Motor neuron (in vitro differentiated cells): ENCODE measurements at regions of chr10 and their contacts with region 1.

Region 1: DNA sequence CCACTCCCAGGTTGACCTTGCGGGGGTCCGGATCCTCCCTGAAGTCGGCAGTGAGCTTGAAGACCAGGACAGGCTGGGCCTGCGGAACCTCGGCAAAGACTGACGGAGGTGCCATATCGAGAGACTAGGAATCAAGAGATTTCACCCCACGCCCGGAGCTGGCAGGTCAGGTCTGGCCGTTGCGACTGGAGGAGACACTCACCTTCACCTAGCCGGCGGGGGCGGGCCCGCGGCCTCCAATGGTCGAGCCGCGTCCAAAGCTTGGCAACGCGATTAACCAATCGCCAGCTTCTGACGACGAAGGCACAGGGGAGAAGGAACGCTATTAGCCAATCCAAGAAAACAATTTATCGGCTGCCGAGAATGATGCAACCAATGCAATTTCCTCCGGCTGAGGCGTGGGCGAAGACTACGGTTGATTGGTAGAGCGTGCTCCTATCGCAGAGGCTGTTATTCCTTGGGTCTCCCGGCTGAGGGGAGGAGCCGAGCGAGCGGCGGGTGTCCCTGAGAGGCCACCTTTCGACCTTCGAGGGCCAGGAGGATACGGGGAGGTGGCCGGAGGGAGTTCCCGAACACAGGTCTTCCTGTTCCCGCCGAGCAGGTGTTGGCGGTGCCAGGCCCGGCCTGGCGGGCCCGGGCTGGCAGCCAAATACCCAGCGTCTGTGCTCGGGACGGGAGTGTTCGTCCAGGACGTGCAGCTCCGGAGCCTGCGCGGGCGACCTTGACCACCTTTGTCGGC is at the start of gene GOT1:
- ATAC-seq: peak; percentile 91 to 96 (median 96)
- H3K4me3 ChIP-seq: peak within 1 kb of the TSS; percentile 94 to 99 (median 95)
- H3K27ac ChIP-seq: peak within 1 kb of the TSS; percentile 90 to 92
- H3K4me1 ChIP-seq: peaks cover 5 to 22% of the 10 kb centered on the region in 2 donors
- total RNA-seq, gene GOT1: 21.3 to 97.7 (median 50.1) TPM

Region 2: GRCh38 chr10:99548041-99548530 is 117.5 kb after region 1 on chr10:
- in situ Hi-C with region 1: loop called in 1 of 9 experiments (anchors 10 kb)
- ATAC-seq: peak in 3 of 8 experiments; percentile 56 to 85 (median 67)
- H3K4me3 ChIP-seq: no peak overlapping the region
- H3K27ac ChIP-seq: no peak overlapping the region
- H3K4me1 ChIP-seq: no peaks in the 10 kb centered on the region

Region 3: DNA sequence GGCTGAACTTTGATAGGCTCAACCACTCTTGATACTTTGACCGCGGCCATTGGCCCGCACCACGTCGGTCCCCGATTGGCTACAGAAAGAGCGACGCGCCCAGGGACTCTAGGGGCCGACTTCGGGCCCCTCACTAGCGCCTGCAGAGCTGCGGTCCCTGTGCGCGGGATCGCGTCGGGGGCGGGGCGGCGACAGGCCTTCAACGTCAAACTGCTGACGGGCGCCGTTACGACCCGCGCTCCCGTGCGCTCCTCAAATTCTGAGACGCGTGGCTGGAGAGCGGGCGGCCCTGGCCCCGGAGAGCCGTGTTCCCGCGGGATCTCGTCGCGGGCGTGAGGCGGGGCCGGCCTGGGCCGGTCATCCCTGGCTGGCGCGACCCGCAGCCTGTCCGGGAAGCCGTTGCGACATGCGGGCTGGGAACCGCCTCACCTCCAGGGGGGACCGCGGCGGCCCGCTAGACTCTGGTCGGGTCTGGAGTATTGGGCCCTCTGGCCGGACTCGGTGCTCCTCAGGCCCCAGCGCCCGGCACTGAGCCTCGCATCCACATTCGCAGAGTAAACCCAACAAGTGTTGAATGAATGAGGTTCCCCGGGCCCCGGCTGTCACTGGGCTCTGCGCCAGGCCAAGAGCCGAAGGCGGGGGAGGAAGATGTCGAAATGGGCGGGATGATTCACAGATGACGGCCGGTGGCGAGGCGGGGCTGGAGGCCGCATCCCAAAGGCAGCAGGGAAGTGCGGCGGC is 190.3 kb after region 1 on chr10:
- in situ Hi-C with region 1: loop called in 5 of 9 experiments (anchors 25 kb)
- ATAC-seq: peak; percentile 74 to 89 (median 87)
- H3K4me3 ChIP-seq: peak overlapping the region; percentile 52 to 67 (median 59)
- H3K27ac ChIP-seq: peak overlapping the region; percentile 92 to 94
- H3K4me1 ChIP-seq: peaks cover 8 to 23% of the 10 kb centered on the region in 2 donors

Region 4: DNA sequence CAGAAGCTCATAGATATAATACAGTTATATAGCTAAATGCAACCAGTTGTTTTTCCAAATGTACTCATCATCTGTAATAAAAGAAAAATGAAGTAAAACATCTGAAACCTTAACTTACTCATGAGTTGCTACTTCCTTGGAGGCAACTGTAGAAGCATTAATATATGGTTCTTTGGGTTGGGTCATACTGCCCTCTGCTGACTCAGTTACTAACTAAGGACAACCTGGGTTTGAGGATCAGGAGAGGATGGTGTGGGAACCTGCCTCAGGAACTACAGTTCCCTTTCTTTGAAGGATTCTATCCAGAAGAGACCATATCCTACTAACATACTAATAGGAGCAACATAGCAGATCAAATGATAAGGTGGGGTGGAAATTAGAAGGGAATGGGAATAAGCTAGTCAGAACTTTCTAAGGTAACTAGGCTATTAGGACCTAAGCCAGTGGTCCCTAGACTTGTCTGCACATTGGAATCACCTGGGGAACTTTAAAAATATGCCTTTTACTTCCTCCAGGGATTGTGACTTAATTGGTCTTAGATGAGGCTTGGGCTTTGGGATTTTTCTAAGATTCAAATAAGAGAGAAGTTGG is 280.6 kb after region 1 on chr10:
- in situ Hi-C with region 1: loop called in 1 of 9 experiments (anchors 25 kb)
- ATAC-seq: peak in 4 of 8 experiments; percentile 41 to 68 (median 66)
- H3K4me3 ChIP-seq: no peak overlapping the region
- H3K27ac ChIP-seq: no peak overlapping the region
- H3K4me1 ChIP-seq: no peaks in the 10 kb centered on the region

Region 5: DNA sequence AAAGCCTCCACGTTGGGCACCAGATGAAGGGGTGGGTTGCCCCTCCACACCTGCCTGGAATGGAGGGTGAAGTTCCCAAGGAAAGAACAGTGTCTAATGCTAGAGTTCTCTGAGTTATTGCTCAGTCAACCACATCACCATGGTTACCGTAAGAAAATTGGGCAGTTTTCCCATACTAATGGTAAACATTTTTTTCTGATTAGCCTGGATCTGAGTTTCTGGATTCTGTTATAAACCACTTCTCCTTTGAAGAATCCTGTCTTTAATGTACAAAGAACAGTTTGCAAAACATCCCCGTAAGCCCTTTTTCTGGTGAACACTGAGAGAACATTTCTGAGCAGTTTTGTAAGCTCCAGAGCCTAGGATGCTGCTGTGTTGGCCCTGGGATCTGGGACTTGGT is 397.3 kb after region 1 on chr10:
- in situ Hi-C with region 1: no loop called
- ATAC-seq: no peak
- H3K4me3 ChIP-seq: no peak overlapping the region
- H3K27ac ChIP-seq: no peak overlapping the region
- H3K4me1 ChIP-seq: no peaks in the 10 kb centered on the region